Uterus (tissue), 4 donors: ENCODE measurements at regions of chr17 and their contacts with region 1.

Region 1: DNA sequence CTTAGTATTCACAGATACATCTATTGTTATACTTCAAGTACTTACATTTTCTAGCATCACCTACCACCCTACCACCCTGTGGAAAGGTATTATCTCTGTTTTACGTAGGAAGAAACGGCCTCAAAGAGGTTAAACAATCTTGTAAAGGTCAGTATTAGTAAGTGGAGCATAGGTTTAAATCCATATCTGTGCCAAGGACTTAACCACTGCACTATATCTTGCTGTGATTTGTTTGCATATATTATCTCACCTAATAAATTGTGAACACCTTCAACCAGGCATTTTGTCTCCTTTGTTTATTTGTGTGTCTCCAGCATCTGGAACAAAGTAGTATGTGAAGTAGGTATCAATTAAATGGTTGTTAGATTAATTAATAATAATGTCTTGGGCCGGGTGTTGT is 27.3 kb downstream of the IGF2BP1 start:
- DNase-seq: no peak
- H3K4me3 ChIP-seq: no peak overlapping the region
- H3K27ac ChIP-seq: no peak overlapping the region
- H3K4me1 ChIP-seq: no peaks in the 10 kb centered on the region
- H3K27me3 ChIP-seq: no peaks in the 10 kb centered on the region
- CTCF ChIP-seq: no peak
- POLR2A ChIP-seq: no peak

Region 2: DNA sequence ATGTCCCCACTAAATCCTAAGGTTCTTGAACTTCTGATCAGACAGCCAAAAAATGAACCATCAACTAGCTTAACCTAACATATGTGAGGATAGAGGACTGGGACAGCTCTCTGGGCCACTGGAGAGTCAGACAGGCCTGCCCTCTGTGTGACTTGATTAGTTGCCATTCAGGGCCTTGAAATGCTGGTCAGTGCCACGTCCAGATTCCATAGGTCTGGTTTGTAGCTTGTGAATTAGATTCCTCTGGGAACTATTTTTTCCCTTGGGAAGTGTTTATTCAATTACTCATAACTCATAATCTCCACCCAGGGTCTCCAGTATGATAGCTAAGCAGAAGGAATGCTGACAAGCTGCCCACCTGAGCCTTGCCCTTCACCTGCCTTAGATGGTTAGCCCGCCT is 20.9 kb after region 1 on chr17:
- intact Hi-C with region 1: loop called (anchors 2 kb)
- DNase-seq: no peak
- H3K4me3 ChIP-seq: no peak overlapping the region
- H3K27ac ChIP-seq: no peak overlapping the region
- H3K4me1 ChIP-seq: no peaks in the 10 kb centered on the region
- H3K27me3 ChIP-seq: no peaks in the 10 kb centered on the region
- CTCF ChIP-seq: no peak
- POLR2A ChIP-seq: no peak

Region 3: DNA sequence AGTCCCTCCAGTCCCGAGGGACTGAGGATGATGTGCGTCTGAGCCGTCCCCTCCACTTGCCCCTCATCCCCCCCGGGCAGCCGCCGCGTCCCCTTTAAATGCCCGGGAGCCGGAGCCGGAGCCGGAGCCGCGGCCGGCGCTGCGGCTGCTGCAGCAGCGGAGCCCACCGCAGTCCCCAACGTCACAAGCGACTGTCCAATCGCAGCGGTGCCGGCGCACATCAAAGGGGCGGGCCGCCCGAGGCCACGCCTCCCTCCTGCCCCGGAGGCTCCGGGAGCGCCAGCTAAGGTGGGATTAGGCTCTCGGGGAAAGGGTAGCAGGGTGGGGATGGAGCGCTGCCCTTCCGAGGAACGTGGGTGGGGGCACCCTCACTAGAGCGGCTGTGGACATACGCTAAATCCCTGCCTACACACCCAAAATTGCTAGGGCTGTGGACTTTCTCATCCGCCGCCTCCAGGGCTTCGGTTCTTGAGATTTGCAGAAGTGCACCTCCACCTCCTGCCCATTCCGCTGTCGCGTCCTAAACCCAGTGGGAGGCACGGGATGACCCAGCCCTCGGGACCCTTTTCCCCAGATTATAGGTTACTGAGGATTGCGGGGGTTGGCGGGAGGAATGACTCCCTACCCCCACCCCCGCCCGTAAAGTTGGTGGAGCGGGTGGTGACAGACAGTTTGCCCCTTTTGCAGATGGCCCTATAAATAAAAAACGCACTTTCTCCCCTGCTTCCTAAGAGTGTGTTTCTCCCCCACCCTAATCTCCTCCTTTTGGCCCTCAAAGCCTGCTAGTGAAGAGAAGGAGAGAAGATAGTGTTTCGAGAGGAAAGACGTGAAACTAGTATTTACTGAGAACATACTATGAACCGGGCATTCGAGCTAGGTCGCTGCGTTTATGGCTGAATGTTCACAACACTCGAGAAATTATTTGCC is 206.4 kb after region 1 on chr17 and contains the start of gene PHOSPHO1:
- intact Hi-C with region 1: no loop called
- DNase-seq: peak; percentile 74 to 78
- H3K4me3 ChIP-seq: peak within 1 kb of the TSS; percentile 31 to 39
- H3K27ac ChIP-seq: no peak within 1 kb of the TSS
- H3K4me1 ChIP-seq: no peaks in the 10 kb centered on the region
- H3K27me3 ChIP-seq: no peaks in the 10 kb centered on the region
- CTCF ChIP-seq: no peak
- POLR2A ChIP-seq: peak in 1 of 2 donors; percentile 11
- total RNA-seq, gene PHOSPHO1: 0.40 to 2.4 TPM in 2 of 4 donors, not detected in the others